ENCODE measurements at regions of chr11 and their contacts with region 1.

Region 1: GRCh38 chr11:9613118-9613829 is 39.8 kb downstream of the WEE1 start:
- DNase-seq: peak; percentile 99
- H3K4me3 ChIP-seq: peak overlapping the region in 2 of 3 experiments; percentile 16 to 43
- H3K27ac ChIP-seq: peak overlapping the region; percentile 100
- H3K4me1 ChIP-seq: peaks cover 36% of the 10 kb centered on the region
- H3K27me3 ChIP-seq: no peaks in the 10 kb centered on the region
- CTCF ChIP-seq: peak; percentile 95 to 96
- POLR2A ChIP-seq: no peak

Region 2: GRCh38 chr11:9534791-9535781 is 78.2 kb before region 1 on chr11:
- CTCF ChIA-PET with region 1: interaction called, 13 read pairs
- POLR2A ChIA-PET with region 1: no interaction called
- dilution Hi-C with region 1: no loop called
- intact Hi-C with region 1: loop called (anchors 1 kb)
- DNase-seq: peak; percentile 66
- H3K4me3 ChIP-seq: no peak overlapping the region
- H3K27ac ChIP-seq: no peak overlapping the region
- H3K4me1 ChIP-seq: no peaks in the 10 kb centered on the region
- H3K27me3 ChIP-seq: no peaks in the 10 kb centered on the region
- CTCF ChIP-seq: peak; percentile 83 to 90
- POLR2A ChIP-seq: no peak

Region 3: GRCh38 chr11:9663699-9664275 is 50.5 kb after region 1 on chr11 and contains the start of gene SWAP70:
- CTCF ChIA-PET with region 1: interaction called, 3 read pairs
- POLR2A ChIA-PET with region 1: no interaction called
- dilution Hi-C with region 1: no loop called
- intact Hi-C with region 1: loop called (anchors 1 kb)
- DNase-seq: peak; percentile 89
- H3K4me3 ChIP-seq: peak within 1 kb of the TSS; percentile 57 to 97 (median 63)
- H3K27ac ChIP-seq: peak within 1 kb of the TSS; percentile 93
- H3K4me1 ChIP-seq: peaks cover 18% of the 10 kb centered on the region
- H3K27me3 ChIP-seq: no peaks in the 10 kb centered on the region
- CTCF ChIP-seq: peak in 1 of 2 donors; percentile 41
- POLR2A ChIP-seq: peak; percentile 89
- total RNA-seq, gene SWAP70: 156 and 165 TPM in 2 replicates

Region 4: DNA sequence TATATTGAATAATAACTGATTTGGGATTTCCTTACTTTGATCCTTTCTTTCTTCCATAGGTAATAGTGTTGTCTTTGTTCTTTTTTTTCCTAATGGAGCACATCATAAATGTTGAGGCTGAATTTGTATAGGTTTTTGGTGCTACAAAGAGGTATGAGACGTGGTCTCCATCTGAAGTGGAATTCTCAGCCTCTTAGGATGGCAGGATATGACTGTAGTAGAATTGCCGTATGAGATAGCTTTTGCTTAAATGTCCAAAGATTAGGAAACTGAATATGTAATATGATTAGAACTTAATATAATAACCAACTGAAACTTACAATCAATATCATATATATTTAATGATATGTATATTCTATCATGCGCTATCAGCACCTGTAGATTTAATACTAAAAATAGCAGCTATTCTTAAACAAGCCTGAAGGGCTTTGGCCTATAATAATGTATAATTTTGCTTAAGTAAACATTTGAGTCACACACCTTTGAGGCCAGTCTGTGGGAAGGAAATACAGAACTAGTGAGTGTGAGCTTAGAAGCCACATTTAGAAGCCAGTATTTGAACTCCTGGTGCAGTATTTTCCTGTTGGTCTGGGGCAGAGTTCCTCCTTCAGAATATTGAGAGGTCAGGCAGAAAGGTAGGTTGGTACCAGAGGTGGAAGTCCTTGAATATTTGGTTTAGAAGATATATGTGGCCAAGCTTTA is 113.2 kb after region 1 on chr11:
- CTCF ChIA-PET with region 1: interaction called, 8 read pairs
- POLR2A ChIA-PET with region 1: no interaction called
- dilution Hi-C with region 1: loop called (anchors 25 kb)
- intact Hi-C with region 1: loop called (anchors 1 kb)
- DNase-seq: peak; percentile 84
- H3K4me3 ChIP-seq: peak overlapping the region in 1 of 3 experiments; percentile 13
- H3K27ac ChIP-seq: peak overlapping the region; percentile 65
- H3K4me1 ChIP-seq: peaks cover 35% of the 10 kb centered on the region
- H3K27me3 ChIP-seq: no peaks in the 10 kb centered on the region
- CTCF ChIP-seq: no peak
- POLR2A ChIP-seq: peak; percentile 44

Region 5: GRCh38 chr11:9861860-9862725 is 248.8 kb after region 1 on chr11:
- CTCF ChIA-PET with region 1: no interaction called
- POLR2A ChIA-PET with region 1: no interaction called
- dilution Hi-C with region 1: no loop called
- intact Hi-C with region 1: loop called (anchors 5 kb)
- DNase-seq: peak; percentile 74
- H3K4me3 ChIP-seq: no peak overlapping the region
- H3K27ac ChIP-seq: no peak overlapping the region
- H3K4me1 ChIP-seq: peaks cover 40% of the 10 kb centered on the region
- H3K27me3 ChIP-seq: no peaks in the 10 kb centered on the region
- CTCF ChIP-seq: peak; percentile 66 to 74
- POLR2A ChIP-seq: no peak